Activated naive CD4-positive, alpha-beta T cell treated with anti-CD3 and anti-CD28 coated beads for 36 hours (primary cell): ENCODE measurements at regions of chr2 and their contacts with region 1.

Region 1: DNA sequence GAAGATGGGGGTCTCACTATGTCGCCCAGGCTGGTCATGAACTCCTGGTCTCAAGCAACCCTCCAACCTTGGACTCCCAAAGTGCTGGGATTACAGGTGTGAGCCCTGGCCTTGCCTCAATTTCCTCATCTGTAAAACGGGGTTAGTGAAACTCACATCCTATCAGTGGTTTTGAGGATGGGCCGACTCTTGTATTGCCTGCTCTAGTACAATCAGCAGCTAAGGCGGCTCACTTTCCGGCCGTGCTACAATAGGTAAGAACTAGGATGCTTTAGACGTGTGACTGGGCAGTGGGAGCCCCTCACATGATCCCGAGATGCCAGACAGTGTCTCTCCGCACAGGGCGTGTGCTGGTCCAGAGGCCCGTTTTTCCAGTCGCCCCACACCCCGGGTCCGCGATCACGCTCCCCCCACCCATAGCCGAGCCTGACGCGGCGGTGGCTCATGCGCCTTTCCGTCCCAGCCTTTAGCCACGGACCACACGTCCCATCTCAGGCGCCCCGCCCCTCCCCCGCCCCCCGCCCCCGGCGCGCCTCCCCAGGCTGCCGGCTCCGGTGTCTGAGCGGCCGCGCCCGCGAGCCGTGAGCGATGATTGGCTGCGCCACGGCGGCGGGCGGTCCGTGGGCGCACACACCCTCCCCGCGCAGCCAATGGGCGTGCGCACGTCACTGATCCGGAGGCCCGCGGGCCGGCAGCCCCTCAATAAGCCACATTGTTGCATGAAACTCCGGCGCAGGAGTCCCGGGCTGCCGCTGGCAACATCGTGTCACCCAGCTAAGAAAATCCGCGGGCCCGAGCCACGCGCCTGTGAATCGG is at the start of gene HK2:
- DNase-seq: peak; percentile 78
- H3K4me3 Mint-ChIP-seq: peak within 1 kb of the TSS; percentile 94
- H3K27ac Mint-ChIP-seq: peak within 1 kb of the TSS; percentile 86
- H3K4me1 Mint-ChIP-seq: peaks cover 41% of the 10 kb centered on the region
- H3K27me3 Mint-ChIP-seq: no peaks in the 10 kb centered on the region
- total RNA-seq, gene HK2: 37.9 to 38.7 TPM

Region 2: DNA sequence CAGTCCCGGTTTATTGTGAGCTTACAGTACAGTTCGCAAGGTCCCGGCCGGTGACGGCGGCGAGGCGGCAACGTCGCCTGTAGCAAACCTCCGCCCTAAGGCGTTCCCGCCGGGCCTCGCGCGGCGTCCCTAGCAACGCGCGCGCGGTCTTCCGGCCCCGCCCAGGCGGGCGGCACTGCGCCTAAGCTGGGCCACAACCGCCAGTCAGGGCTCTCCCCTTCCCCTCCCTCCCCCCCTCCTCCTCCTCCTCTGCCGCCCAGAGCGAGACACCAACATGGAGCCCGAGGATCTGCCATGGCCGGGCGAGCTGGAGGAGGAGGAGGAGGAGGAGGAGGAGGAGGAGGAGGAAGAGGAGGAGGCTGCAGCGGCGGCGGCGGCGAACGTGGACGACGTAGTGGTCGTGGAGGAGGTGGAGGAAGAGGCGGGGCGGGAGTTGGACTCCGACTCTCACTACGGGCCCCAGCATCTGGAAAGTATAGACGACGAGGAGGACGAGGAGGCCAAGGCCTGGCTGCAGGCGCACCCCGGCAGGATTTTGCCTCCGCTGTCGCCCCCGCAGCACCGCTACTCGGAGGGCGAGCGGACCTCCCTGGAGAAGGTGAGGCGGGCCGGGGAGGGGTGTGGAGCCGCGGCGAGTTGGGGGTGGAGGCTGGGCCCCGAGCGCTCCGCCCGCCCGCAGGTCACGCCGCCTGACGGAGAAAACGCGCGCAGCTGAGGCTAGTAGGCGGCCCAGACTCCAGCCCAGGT is 1447.9 kb before region 1 on chr2 and contains the start of gene ALMS1:
- CTCF ChIA-PET with region 1: no interaction called
- intact Hi-C with region 1: loop called (anchors 10 kb)
- DNase-seq: peak; percentile 91
- H3K4me3 Mint-ChIP-seq: peak within 1 kb of the TSS; percentile 92
- H3K27ac Mint-ChIP-seq: peak within 1 kb of the TSS; percentile 86
- H3K4me1 Mint-ChIP-seq: peaks cover 28% of the 10 kb centered on the region
- H3K27me3 Mint-ChIP-seq: no peaks in the 10 kb centered on the region
- total RNA-seq, gene ALMS1: 15.4 to 15.8 TPM

Region 3: GRCh38 chr2:74507145-74507925 is 326.3 kb before region 1 on chr2 and contains the start of gene PCGF1:
- CTCF ChIA-PET with region 1: no interaction called
- intact Hi-C with region 1: loop called (anchors 2 kb)
- DNase-seq: peak; percentile 99
- H3K4me3 Mint-ChIP-seq: peak within 1 kb of the TSS; percentile 91
- H3K27ac Mint-ChIP-seq: peak within 1 kb of the TSS; percentile 98
- H3K4me1 Mint-ChIP-seq: peaks cover 40% of the 10 kb centered on the region
- H3K27me3 Mint-ChIP-seq: peaks cover 41% of the 10 kb centered on the region
- total RNA-seq, gene PCGF1: 21.1 to 24.4 TPM

Region 4: GRCh38 chr2:74653985-74654882 is 179.4 kb before region 1 on chr2 and contains the start of gene SEMA4F:
- CTCF ChIA-PET with region 1: interaction called, 3 read pairs
- intact Hi-C with region 1: loop called (anchors 1 kb)
- DNase-seq: peak; percentile 97
- H3K4me3 Mint-ChIP-seq: peak within 1 kb of the TSS; percentile 72
- H3K27ac Mint-ChIP-seq: peak within 1 kb of the TSS; percentile 33
- H3K4me1 Mint-ChIP-seq: peaks cover 11% of the 10 kb centered on the region
- H3K27me3 Mint-ChIP-seq: peaks cover under 1% of the 10 kb centered on the region
- total RNA-seq, gene SEMA4F: 4.3 to 5.3 TPM

Region 5: GRCh38 chr2:74876081-74876886 is 42.7 kb after region 1 on chr2:
- CTCF ChIA-PET with region 1: interaction called, 37 read pairs
- intact Hi-C with region 1: loop called (anchors 1 kb)
- DNase-seq: peak; percentile 62
- H3K4me3 Mint-ChIP-seq: no peak overlapping the region
- H3K27ac Mint-ChIP-seq: no peak overlapping the region
- H3K4me1 Mint-ChIP-seq: no peaks in the 10 kb centered on the region
- H3K27me3 Mint-ChIP-seq: no peaks in the 10 kb centered on the region